Motor neuron (in vitro differentiated cells): ENCODE measurements at regions of chr20 and their contacts with region 1.

Region 1: GRCh38 chr20:8722276-8722928 is 346.5 kb upstream of the PLCB4 start:
- ATAC-seq: peak; percentile 60 to 87 (median 76)
- H3K4me3 ChIP-seq: no peak overlapping the region
- H3K27ac ChIP-seq: no peak overlapping the region
- H3K4me1 ChIP-seq: no peaks in the 10 kb centered on the region

Region 2: DNA sequence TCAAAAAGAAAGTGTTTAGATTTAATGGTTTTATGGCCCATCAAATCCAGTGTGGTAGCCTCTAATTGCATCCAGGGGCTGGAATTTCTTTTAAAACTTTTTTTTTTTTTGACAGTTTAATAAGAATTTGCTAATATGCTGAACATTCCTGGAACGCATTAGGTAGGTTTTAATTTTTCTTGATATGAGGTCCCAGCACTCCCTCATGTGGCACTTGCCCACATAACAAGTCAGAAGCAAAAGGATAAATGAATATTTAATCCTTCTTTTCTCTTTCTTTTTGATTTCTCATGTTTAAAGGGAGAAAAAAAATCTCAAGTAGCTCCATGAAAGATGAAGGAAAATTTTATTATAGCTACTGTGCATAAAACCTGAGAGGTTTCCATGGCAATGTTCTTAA is 795.6 kb before region 1 on chr20:
- in situ Hi-C with region 1: loop called in 2 of 9 experiments (anchors 25 kb)
- ATAC-seq: peak in 2 of 8 experiments; percentile 29 to 38
- H3K4me3 ChIP-seq: no peak overlapping the region
- H3K27ac ChIP-seq: no peak overlapping the region
- H3K4me1 ChIP-seq: no peaks in the 10 kb centered on the region

Region 3: GRCh38 chr20:8043687-8044282 is 678.6 kb before region 1 on chr20:
- in situ Hi-C with region 1: loop called in 4 of 9 experiments (anchors 5 to 25 kb)
- ATAC-seq: peak; percentile 43 to 96 (median 62)
- H3K4me3 ChIP-seq: no peak overlapping the region
- H3K27ac ChIP-seq: no peak overlapping the region
- H3K4me1 ChIP-seq: no peaks in the 10 kb centered on the region

Region 4: GRCh38 chr20:8049310-8049709 is 673.1 kb before region 1 on chr20:
- in situ Hi-C with region 1: loop called in 4 of 9 experiments (anchors 5 to 25 kb)
- ATAC-seq: peak in 2 of 8 experiments; percentile 71 to 89
- H3K4me3 ChIP-seq: no peak overlapping the region
- H3K27ac ChIP-seq: no peak overlapping the region
- H3K4me1 ChIP-seq: no peaks in the 10 kb centered on the region

Region 5: GRCh38 chr20:8131598-8132483 is 590.6 kb before region 1 on chr20 and contains the start of gene PLCB1:
- in situ Hi-C with region 1: loop called in 3 of 9 experiments (anchors 10 to 25 kb)
- ATAC-seq: peak; percentile 89 to 95 (median 92)
- H3K4me3 ChIP-seq: peak within 1 kb of the TSS; percentile 46 to 82 (median 64)
- H3K27ac ChIP-seq: peak within 1 kb of the TSS; percentile 16 to 52
- H3K4me1 ChIP-seq: peaks cover 13 to 34% of the 10 kb centered on the region in 2 donors
- total RNA-seq, gene PLCB1: 7.7 to 65.5 (median 36.2) TPM